PC-9 (cell line): ENCODE measurements at regions of chr20 and their contacts with region 1.

Region 1: DNA sequence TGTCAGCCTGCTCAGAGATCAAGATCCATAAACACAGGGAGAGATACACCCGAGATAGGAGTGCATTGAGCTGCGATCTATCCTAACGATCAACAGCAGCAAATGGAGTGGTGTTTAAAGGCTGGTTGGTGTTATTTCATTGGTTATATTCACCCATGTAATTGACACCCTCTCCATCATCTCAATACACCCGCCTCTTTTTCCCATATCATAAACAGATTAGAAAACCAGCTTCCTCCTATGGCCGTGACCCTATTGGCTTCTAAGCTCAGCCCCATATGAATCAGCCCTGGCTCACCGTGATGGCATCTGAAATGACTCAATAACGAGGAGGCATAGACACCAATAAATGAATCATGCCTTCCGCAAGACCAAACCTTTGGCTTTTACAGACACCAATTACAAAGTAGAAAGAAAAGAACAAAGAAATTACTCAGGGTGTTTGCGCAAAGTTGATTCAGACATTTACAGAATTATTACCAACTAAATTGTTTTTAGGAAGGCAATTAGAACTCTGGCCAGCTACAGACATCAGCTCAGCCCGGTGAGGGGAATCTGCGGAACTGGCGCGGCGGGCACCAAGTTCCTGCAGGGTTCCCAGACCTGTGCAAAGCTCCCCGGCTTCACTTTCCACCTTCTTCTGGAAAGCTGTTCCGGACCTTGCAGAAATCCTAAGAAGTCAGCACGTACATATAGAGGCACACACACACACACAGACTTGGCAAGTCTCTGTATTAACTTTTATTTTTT is 11.5 kb downstream of the PMEPA1 start:
- DNase-seq: peak; percentile 92 to 100
- H3K4me3 ChIP-seq: peak overlapping the region; percentile 44; the same call in 1 of the 2 replicates
- H3K27ac ChIP-seq: peak overlapping the region; percentile 96
- H3K4me1 ChIP-seq: peaks cover 96% of the 10 kb centered on the region
- H3K27me3 ChIP-seq: no peaks in the 10 kb centered on the region
- CTCF ChIP-seq: no peak

Region 2: DNA sequence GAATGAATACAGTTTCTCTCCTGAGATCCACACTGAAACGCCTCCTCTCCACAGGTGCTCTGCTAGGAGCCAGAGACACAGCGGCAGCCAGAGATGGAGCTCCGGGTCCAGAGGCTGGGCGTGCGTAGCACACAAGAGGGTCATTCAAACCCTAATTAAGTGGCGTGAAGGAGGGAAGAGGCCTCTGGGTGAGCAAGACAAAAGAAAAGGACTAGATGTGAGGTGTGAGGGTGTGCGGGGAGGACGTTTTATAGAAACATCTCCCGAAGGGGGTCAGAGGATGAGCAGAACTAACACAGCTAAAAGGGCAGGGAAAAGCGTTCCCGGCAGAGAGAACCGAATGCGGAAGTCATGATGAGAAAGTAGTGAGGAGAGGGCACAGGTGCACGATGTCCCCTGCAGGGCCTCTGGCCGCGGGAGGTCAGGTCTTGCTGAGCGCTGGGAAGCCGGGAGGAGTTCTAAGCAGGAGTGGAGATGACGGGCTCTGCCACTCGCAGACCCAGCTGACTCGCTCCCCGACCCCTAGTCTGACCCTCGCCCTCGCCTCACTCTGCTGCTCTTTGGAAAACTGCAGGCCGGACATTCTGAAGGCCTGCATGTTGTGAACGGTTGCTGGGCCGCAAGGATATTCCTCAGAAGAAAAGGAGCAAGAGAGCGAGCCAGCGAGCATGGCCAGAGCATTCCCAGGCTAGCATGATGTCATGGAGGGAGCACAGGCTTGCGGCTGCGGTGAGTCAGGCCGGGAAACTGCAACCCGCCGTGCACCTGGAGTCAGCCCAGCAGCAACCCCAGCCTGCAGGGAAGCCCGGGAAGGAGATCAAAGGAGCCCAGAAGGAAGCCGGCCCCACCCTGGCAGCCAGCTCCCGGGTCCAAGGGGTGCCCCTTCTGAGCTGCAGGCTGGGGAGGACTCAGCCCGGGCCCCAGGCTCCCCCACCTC is 486.1 kb before region 1 on chr20:
- CTCF ChIA-PET with region 1: no interaction called
- POLR2A ChIA-PET with region 1: no interaction called
- intact Hi-C with region 1: no loop called
- DNase-seq: peak; percentile 82 to 84
- H3K4me3 ChIP-seq: peak overlapping the region; percentile 32; the same call in 1 of the 2 replicates
- H3K27ac ChIP-seq: no peak overlapping the region
- H3K4me1 ChIP-seq: peaks cover 15% of the 10 kb centered on the region
- H3K27me3 ChIP-seq: no peaks in the 10 kb centered on the region
- CTCF ChIP-seq: no peak

Region 3: DNA sequence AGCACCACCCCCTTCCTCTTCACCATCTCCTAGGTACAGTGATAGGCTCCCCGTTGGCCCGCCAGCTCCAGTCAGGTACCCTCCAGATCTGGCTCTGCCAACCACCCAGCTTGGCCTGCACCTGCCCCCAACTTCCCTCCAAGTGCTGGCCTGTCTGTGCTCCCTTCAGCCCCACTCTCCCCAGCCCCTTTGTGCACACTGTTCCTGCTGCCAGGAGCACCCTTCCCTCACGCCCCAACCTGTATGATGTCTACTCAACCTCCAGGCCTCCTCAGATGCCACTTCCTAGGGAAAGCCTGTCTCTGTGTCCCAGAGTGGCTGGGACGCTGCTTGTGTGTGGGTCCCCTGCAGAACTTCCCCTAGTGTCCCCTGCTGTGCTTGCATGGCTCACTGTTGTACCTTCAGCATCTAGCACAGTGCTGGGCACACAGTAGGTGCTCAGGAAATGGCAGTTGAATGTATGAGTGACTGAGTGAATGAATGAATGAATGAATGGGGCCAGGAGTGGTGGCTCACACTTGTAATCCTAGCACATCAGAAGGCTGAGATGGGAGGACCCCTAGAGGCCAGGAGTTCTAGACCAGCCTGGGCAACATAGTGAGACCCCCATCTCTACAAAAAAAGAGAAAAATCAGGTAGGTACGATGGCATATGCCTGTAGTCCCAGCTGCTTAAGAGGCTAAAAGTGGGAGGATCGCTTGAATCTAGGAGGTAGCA is 81.1 kb before region 1 on chr20:
- CTCF ChIA-PET with region 1: no interaction called
- POLR2A ChIA-PET with region 1: interaction called, 21 read pairs
- intact Hi-C with region 1: loop called (anchors 1 kb)
- DNase-seq: no peak
- H3K4me3 ChIP-seq: no peak overlapping the region
- H3K27ac ChIP-seq: no peak overlapping the region
- H3K4me1 ChIP-seq: peaks cover 24% of the 10 kb centered on the region
- H3K27me3 ChIP-seq: no peaks in the 10 kb centered on the region
- CTCF ChIP-seq: no peak

Region 4: GRCh38 chr20:57654363-57654997 is 43.8 kb before region 1 on chr20:
- CTCF ChIA-PET with region 1: no interaction called
- POLR2A ChIA-PET with region 1: no interaction called
- intact Hi-C with region 1: loop called (anchors 2 kb)
- DNase-seq: peak in 1 of 2 experiments; percentile 67
- H3K4me3 ChIP-seq: no peak overlapping the region
- H3K27ac ChIP-seq: no peak overlapping the region
- H3K4me1 ChIP-seq: no peaks in the 10 kb centered on the region
- H3K27me3 ChIP-seq: no peaks in the 10 kb centered on the region
- CTCF ChIP-seq: peak; percentile 98

Region 5: DNA sequence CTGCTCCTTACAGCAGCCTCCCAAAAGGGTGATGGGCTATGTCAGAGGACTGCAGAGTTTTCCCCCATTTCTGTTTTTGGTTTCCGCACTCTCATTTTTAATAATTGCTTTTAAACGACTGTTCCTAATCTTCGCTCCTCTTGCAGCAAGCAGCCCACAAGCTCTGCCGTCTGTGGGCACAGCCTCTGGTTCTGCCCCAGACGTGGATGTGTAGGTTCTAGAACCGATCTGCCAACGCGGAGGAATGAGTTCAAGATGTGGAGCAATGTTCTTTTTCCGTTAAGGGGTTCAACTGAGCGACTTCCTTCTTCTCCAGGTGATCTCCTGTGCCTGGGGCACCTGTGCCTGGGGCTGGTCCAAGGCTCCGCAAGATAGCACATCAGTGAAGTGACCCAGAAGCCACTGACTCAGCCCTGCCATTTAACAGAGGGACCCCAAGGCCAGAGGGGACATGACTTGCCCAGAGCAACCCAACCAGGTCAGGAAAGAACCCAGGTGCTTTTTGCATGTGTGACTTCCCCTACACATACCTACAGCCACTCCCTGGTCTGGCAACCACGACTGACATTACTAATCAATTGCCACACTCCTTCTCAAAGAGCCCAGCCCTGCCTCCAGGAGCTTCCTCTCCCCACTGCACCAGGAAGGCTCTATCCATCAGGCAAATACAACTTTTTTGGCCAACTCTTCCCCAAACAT is 11.2 kb before region 1 on chr20:
- CTCF ChIA-PET with region 1: no interaction called
- POLR2A ChIA-PET with region 1: interaction called, 16 read pairs
- intact Hi-C with region 1: loop called (anchors 1 kb)
- DNase-seq: peak; percentile 95 to 100
- H3K4me3 ChIP-seq: peak overlapping the region; percentile 3; the same call in 1 of the 2 replicates
- H3K27ac ChIP-seq: peak overlapping the region; percentile 96
- H3K4me1 ChIP-seq: peaks cover 100% of the 10 kb centered on the region
- H3K27me3 ChIP-seq: no peaks in the 10 kb centered on the region
- CTCF ChIP-seq: no peak

Region 6: GRCh38 chr20:57724619-57725405 is 26.5 kb after region 1 on chr20:
- CTCF ChIA-PET with region 1: no interaction called
- POLR2A ChIA-PET with region 1: no interaction called
- intact Hi-C with region 1: no loop called
- DNase-seq: peak; percentile 34 to 63
- H3K4me3 ChIP-seq: no peak overlapping the region
- H3K27ac ChIP-seq: no peak overlapping the region
- H3K4me1 ChIP-seq: peaks cover 28% of the 10 kb centered on the region
- H3K27me3 ChIP-seq: no peaks in the 10 kb centered on the region
- CTCF ChIP-seq: no peak